ENCODE measurements at regions of chr6 and their contacts with region 1.

Region 1: DNA sequence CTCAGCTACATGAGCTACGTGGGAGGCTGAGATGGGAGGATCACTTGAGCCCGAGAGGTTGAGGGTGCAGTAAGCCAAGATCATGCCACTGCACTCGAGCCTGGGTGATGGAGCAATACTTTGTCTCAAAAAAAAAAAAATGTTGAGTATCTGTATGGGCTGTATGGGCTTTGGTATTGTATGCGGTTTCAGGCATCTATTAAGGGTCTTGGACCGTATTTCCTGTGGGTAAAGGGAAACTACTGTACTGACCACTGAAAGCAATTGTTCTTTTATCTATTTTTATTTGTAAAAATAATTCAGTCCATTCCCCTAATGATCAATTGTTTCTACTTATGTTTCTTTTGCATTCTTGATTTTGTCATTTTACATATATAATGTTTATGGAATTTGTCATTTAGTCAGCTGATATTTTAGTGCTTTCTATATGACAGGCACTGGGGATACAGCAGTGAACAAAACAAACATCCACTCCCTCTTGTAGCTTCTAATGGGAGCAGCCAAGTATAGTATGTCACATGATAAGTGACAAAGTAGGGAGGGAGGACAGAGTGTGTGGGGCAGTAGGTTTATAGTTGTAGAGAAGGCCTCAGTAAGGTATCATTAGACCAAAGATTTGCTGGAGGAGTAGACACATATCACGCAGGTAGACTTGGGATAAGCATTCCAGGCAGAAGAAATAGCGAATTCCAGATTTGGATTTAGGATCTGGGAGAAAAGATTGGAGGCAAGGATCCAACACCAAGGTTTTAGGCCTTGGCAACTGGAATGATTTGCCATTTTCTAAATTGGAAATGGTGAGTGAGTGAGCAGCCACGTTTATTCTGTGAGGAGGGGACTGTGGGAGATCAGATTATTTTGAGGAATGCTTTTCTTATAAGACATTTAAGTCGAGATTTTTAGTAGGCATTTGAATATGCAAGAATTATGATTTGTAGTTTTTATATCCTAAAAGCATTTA is 6.0 kb downstream of the PCMT1 start:
- DNase-seq: no peak
- H3K4me3 ChIP-seq: no peak overlapping the region
- H3K27ac ChIP-seq: no peak overlapping the region
- H3K4me1 ChIP-seq: peaks cover 4% of the 10 kb centered on the region
- H3K27me3 ChIP-seq: no peaks in the 10 kb centered on the region
- CTCF ChIP-seq: no peak

Region 2: GRCh38 chr6:149734915-149735314 is 20.7 kb before region 1 on chr6:
- CTCF ChIA-PET with region 1: no interaction called
- POLR2A ChIA-PET with region 1: interaction called, 11 read pairs
- intact Hi-C with region 1: no loop called
- DNase-seq: no peak
- H3K4me3 ChIP-seq: no peak overlapping the region
- H3K27ac ChIP-seq: no peak overlapping the region
- H3K4me1 ChIP-seq: no peaks in the 10 kb centered on the region
- H3K27me3 ChIP-seq: no peaks in the 10 kb centered on the region
- CTCF ChIP-seq: no peak